ENCODE measurements at regions of chr4 and their contacts with region 1.

Region 1: GRCh38 chr4:139453371-139454110 is 380 bp upstream of the RAB33B start:
- DNase-seq: peak; percentile 98 to 99 (median 98)
- ATAC-seq: peak; percentile 98
- H3K4me3 ChIP-seq: peak overlapping the region; percentile 71 to 95 (median 90)
- H3K27ac ChIP-seq: peak overlapping the region; percentile 88 to 99 (median 97)
- H3K4me1 ChIP-seq: peaks cover 9 to 55% (median 33%) of the 10 kb centered on the region in 12 donors
- H3K27me3 ChIP-seq: no peaks in the 10 kb centered on the region
- CTCF ChIP-seq: peak in 5 of 12 donors; percentile 5 to 46 (median 7)
- POLR2A ChIP-seq: peak in 1 of 2 donors; percentile 73

Region 2: DNA sequence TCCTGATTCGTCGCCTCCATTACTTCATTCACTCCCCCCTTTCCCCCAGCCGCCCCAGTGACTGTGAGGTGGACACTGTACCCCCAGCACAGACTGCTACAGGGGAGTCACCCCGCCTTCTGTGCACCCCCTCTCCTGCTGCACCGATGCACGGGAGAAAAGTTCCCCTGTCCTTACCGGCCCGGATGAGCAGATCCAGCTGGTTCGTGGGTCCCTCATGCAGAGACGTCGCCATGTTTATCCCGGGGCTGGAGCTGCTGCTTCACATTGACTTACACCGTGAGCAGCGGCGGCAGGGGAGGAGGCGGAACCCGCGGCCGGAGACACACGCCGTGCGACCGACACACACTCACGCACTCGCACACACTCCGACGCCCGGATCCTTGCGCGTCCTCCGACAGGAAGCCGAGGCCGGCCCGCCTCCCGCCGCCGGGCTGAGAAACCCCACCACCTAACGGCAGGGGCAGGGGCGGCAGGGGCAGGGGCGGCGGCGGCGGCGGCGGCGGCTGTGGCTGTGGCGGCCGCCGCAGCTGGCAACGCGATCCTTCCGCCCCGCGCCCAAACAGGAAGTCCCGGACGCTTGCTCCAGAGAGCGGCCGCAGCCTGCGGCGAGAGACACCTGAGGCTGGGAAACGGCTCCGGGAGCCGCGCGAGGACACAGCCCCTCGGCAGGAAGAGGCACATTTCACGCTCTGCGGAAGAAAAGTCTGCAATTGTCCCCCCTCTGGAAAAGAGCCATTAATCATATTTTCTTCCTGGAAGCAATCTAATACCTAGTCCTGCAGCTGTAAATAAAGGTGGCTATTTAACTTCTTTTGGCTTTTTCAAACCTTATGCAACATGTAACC is 369.4 kb before region 1 on chr4:
- intact Hi-C with region 1: loop called in 1 of 10 experiments (anchors 5 kb)
- DNase-seq: peak; percentile 89 to 95 (median 92)
- ATAC-seq: peak; percentile 57 to 89 (median 78)
- H3K4me3 ChIP-seq: peak overlapping the region; percentile 72 to 94 (median 82)
- H3K27ac ChIP-seq: peak overlapping the region; percentile 80 to 97 (median 94)
- H3K4me1 ChIP-seq: peaks cover 0 to 38% (median 29%) of the 10 kb centered on the region in 12 donors
- H3K27me3 ChIP-seq: no peaks in the 10 kb centered on the region
- CTCF ChIP-seq: peak in 10 of 12 donors; percentile 15 to 54 (median 39)
- POLR2A ChIP-seq: peak in 1 of 2 donors; percentile 30

Region 3: GRCh38 chr4:139416073-139416673 is 37.4 kb before region 1 on chr4:
- intact Hi-C with region 1: loop called in 4 of 10 experiments (anchors 1 to 5 kb)
- DNase-seq: no peak
- ATAC-seq: peak in 1 of 4 donors; percentile 36
- H3K4me3 ChIP-seq: no peak overlapping the region
- H3K27ac ChIP-seq: no peak overlapping the region
- H3K4me1 ChIP-seq: peaks cover 0 to 18% (median 5%) of the 10 kb centered on the region in 12 donors
- H3K27me3 ChIP-seq: no peaks in the 10 kb centered on the region
- CTCF ChIP-seq: peak; percentile 60 to 84 (median 72)
- POLR2A ChIP-seq: no peak

Region 4: DNA sequence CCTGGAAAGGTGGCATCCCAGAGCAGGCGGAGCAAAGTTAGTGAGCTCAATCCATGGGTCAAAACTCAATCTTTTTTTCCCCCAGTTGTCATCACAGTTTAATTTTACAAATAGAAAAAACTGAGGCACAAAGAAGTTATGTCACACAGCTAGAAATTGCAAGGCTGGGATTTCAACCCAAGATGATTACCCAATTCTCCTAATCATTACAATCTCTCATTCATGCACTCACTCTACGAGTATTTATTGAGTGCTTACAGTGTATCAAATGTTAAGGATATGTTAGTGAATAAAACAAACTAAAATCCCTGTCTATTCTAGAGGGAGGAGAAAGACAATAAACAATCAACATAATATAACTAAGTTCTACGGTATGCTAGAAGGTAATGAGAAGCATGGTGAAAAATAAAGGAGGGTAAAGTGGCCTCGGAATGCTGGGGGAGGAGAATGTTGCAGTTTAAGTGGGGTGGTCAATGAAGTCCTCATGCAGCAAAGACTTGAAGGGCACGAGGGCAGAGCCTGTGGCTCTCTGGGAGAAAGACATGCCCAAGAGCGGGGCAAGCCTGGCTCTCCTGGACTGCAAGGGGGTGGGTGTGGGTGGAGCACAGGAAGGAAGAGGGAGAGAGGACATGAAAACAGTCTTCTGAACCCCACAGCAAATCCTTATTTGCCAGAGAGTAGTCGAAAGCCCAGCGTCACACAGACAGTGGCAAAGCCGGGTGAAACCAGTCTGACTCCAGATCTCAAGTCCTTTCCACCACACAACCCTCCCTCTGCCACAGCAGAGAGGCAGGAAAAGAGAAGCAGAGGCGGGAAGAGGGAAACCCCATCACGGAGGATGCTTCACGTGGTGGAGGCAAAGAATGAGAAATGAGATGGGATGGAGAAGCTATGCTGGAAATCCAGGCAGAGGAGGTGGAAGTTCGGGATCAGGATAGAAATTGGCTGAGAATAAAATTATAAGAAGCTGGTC is 48.7 kb after region 1 on chr4:
- intact Hi-C with region 1: loop called in 1 of 10 experiments (anchors 5 kb)
- DNase-seq: no peak
- ATAC-seq: no peak
- H3K4me3 ChIP-seq: no peak overlapping the region
- H3K27ac ChIP-seq: no peak overlapping the region
- H3K4me1 ChIP-seq: peaks cover 0 to 17% (median 0%) of the 10 kb centered on the region in 12 donors
- H3K27me3 ChIP-seq: no peaks in the 10 kb centered on the region
- CTCF ChIP-seq: no peak
- POLR2A ChIP-seq: no peak

Region 5: DNA sequence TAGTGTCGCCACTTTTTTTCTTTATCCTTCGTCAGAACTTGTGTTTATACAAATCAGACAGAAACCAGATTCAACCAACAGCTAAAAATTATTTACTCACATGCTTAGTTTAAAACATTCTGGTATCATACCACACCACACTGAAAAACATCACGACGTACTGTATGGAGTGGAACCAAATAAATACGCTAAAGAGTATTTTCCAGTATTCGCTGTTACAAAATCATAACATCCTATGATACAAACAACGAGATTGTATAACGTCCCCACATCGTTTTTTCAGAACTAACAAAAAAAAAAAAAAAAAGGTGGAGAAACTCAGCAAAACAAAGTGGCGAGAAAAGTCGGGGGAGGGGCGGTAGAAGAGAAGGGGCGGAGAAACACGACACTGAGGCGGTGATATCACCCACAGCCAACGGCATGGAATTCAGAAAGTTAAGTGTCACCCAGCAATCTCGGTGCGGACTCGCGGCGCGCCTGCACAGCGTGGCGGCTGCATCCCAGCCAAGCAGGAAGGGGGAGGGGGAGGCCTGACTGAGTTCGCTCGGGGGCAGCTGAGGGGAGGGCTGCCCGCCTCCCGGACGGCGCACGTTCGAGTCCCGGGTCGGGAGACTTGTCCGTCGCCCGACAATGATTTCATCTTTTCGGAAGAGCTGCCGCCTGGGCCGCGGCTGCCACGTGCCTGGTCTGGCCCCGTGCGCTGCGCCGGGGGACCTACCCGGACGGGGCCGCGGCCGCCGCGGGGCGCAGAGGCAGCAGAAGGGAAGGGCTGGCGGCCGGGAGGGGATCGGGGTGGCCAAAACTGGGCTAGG is 101.6 kb after region 1 on chr4:
- intact Hi-C with region 1: loop called in 5 of 10 experiments (anchors 1 to 10 kb)
- DNase-seq: peak; percentile 93 to 95 (median 94)
- ATAC-seq: peak; percentile 79 to 85 (median 81)
- H3K4me3 ChIP-seq: peak overlapping the region; percentile 72 to 97 (median 93)
- H3K27ac ChIP-seq: peak overlapping the region; percentile 91 to 99 (median 97)
- H3K4me1 ChIP-seq: peaks cover 0 to 76% (median 53%) of the 10 kb centered on the region in 12 donors
- H3K27me3 ChIP-seq: no peaks in the 10 kb centered on the region
- CTCF ChIP-seq: no peak
- POLR2A ChIP-seq: peak in 1 of 2 donors; percentile 78

Region 6: DNA sequence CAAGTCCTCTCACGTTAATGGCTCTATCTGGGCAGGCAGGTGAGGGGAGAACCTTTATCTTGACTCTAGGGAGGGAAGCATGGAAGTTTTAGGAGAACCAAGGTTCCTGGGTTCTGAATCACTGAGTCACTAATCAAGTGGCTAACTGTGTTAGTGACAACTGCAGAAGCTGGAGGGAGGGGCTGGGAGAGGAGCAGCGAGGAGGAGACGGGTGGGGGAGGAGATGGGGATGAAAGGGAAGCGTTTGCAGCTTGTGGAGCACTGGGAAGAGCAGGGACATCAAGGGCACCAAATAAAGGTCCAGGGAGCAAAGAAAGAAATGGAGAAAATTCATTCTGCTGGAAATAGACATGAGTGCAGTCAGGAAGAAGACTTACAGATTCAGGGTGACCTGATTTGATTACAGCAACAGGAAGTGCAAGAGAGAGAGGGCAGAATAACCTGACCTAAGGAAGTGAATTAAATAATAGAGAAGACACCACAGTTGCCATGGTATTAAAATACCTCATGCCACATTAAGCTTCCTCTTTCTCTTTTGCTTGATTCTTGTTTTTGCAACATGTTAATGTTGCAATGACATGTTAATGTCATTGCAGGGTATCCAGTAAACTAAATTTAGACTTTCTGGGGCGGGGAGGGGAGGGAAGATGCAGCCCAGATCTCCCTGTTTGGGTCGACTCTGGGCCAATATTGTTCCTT is 107.0 kb after region 1 on chr4:
- intact Hi-C with region 1: loop called in 5 of 10 experiments (anchors 1 to 10 kb)
- DNase-seq: peak in 3 of 5 donors; percentile 14 to 43 (median 39)
- ATAC-seq: no peak
- H3K4me3 ChIP-seq: peak overlapping the region in 1 of 12 donors; percentile 23
- H3K27ac ChIP-seq: peak overlapping the region in 8 of 12 donors; percentile 1 to 78 (median 34)
- H3K4me1 ChIP-seq: peaks cover 0 to 41% (median 14%) of the 10 kb centered on the region in 12 donors
- H3K27me3 ChIP-seq: no peaks in the 10 kb centered on the region
- CTCF ChIP-seq: no peak
- POLR2A ChIP-seq: no peak

Region 7: DNA sequence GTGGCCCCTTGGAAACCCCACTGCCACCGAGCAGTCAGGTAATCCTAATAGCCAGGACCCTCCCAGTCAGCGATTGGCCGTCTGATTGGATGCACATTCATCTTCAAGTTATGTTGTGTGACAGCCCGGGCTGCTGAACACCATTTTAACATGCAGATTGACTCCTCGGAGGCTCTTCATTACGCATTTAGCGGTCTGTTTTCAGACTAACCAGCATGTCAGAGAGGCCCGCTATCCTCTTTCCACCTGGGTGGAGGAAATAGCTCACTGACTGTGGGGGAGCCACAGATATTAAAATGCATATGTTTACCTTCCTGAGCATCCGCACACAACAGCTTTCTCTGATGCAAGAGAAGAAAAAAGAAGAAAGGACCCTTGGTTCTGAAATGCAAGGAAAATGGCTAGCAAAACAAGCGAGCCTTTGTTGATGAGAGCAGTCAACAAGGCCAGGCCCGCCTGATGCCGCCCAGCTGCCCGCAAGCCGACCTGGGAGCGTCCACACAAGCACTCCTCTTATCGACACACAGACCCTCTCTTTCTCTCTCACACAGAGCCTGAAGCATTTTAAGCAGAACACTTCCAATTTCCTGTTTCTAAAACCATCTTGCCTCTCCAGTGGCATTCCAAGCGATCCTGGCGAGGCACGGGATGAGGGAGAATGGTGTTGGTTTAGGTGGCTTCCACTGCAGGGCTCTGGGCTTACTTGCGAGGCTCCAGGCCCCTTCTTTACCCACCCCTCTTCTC is 330.4 kb after region 1 on chr4:
- intact Hi-C with region 1: no loop called
- DNase-seq: no peak
- ATAC-seq: no peak
- H3K4me3 ChIP-seq: no peak overlapping the region
- H3K27ac ChIP-seq: peak overlapping the region in 1 of 12 donors; percentile 18
- H3K4me1 ChIP-seq: peaks cover 0 to 8% (median 0%) of the 10 kb centered on the region in 12 donors
- H3K27me3 ChIP-seq: no peaks in the 10 kb centered on the region
- CTCF ChIP-seq: no peak
- POLR2A ChIP-seq: no peak